Activated CD4-positive, alpha-beta T cell treated with anti-CD3 and anti-CD28 coated beads for 36 hours (primary cell): ENCODE measurements at regions of chr19 and their contacts with region 1.

Region 1: DNA sequence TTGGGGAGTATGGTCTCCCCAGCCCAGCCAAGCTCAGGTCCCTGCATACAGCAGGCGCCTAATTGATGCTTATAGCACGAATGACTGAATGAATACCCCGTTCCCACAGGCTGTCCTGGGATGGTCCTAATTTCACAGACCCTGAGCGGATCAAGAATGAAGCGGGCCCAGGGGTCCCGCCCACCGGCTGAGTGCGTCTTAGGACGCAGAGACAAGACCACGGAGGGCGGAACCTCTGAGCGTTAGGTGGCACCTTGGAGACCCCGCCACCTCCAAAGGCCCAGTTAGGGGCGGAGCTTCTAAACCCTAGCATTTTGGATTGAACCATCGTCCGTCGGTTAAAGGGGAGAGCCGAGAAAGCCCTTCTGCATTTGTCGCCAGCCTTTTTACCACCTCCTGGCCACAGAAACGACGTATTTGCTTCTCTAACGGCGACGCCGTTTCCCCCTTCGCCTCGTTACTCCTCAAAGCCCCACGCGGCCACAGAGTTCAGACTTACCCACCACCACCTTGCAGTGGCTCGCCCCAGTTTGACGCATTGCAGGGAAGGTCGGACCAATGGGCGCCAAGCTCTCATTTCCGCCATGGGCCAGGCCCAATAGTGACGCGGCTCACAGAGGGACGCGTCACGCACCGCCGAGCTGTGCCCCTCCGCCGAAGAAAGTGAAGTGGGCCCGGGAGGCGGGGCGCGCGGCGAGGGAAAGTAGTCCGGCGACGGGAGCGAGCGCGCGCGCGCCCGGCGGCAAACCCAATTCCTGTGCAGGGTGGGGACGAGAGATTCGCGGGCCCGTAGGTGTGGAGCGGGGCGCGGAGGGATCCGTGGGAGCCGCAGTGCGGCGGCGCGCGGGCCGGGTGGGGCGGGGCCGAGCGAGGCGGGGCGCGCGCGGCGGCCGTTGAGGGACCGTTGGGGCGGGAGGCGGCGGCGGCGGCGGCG is 479 bp upstream of the CALM3 start:
- DNase-seq: peak; percentile 99
- ATAC-seq: peak; percentile 86
- H3K4me3 Mint-ChIP-seq: peak overlapping the region; percentile 84
- H3K27ac Mint-ChIP-seq: peak overlapping the region; percentile 100
- H3K4me1 Mint-ChIP-seq: peaks cover 33% of the 10 kb centered on the region
- H3K27me3 Mint-ChIP-seq: no peaks in the 10 kb centered on the region

Region 2: GRCh38 chr19:44752816-44753618 is 1847.6 kb before region 1 on chr19:
- CTCF ChIA-PET with region 1: no interaction called
- POLR2A ChIA-PET with region 1: no interaction called
- intact Hi-C with region 1: loop called in 1 of 2 experiments (anchors 10 kb)
- DNase-seq: peak; percentile 98
- ATAC-seq: peak; percentile 79
- H3K4me3 Mint-ChIP-seq: peak overlapping the region; percentile 94
- H3K27ac Mint-ChIP-seq: peak overlapping the region; percentile 97
- H3K4me1 Mint-ChIP-seq: peaks cover 54% of the 10 kb centered on the region
- H3K27me3 Mint-ChIP-seq: no peaks in the 10 kb centered on the region

Region 3: DNA sequence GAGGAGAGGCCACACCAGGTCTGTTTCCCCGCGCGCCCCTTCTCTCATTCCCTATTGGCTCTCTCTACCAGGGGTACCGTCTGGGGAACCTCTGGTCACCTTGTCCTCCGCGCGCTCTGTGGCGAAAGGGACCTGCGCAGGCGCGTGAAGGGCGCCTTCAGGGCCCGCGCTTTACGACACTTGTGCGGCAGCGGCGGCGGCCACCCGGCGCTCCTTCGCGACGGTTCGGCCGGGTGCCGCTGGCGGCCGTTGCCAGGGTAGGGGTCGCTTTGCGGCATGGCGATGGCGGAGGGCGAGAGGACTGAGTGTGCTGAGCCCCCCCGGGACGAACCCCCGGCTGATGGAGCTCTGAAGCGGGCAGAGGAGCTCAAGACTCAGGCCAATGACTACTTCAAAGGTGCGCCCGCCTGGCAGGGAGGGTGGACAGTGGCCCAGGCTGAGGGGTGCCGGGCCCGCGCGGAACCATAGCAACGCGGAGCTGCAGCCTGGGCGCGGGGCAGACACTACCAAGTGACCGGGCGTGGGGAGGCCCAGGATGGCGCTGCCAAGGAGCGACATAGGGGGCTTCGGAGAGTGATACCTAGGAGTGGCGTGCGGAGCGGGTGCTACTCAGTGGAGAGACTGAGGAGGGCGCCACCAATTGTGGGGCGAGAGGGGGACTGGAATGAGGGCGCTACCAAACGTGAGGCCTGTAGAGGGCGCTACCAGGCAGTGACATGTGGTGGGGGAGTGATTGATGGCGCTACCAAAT is 253.7 kb before region 1 on chr19 and contains the start of gene PPP5C:
- CTCF ChIA-PET with region 1: no interaction called
- POLR2A ChIA-PET with region 1: interaction called, 4 read pairs
- intact Hi-C with region 1: loop called in 1 of 2 experiments (anchors 1 kb)
- DNase-seq: peak; percentile 94
- ATAC-seq: peak; percentile 74
- H3K4me3 Mint-ChIP-seq: peak within 1 kb of the TSS; percentile 90
- H3K27ac Mint-ChIP-seq: peak within 1 kb of the TSS; percentile 91
- H3K4me1 Mint-ChIP-seq: peaks cover 41% of the 10 kb centered on the region
- H3K27me3 Mint-ChIP-seq: no peaks in the 10 kb centered on the region
- total RNA-seq, gene PPP5C: 100.0 to 129 TPM

Region 4: GRCh38 chr19:46614114-46614722 is 13.6 kb after region 1 on chr19:
- CTCF ChIA-PET with region 1: interaction called, 65 read pairs
- POLR2A ChIA-PET with region 1: interaction called, 24 read pairs
- intact Hi-C with region 1: loop called (anchors 1 to 2 kb)
- DNase-seq: peak; percentile 92
- ATAC-seq: peak; percentile 49
- H3K4me3 Mint-ChIP-seq: no peak overlapping the region
- H3K27ac Mint-ChIP-seq: peak overlapping the region; percentile 62
- H3K4me1 Mint-ChIP-seq: peaks cover 82% of the 10 kb centered on the region
- H3K27me3 Mint-ChIP-seq: no peaks in the 10 kb centered on the region

Region 5: DNA sequence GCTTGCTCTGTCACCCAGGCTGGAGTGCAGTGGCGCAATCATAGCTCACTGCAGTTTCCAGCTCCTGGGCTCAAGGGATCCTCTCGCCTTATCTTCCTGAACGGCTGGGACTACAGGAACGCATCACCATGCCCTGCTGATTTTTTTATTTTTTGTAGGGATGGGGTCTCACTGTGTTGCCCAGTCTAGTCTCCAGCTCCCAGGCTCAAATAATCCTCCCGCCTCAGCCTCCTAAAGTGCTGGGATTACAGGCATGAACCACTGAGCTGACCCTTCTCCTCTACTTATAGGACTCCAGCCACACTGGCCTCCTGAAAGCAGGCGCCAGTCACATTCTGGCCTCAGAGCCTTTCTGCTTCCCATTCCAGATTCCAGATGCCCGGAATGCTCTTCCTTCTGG is 49.8 kb after region 1 on chr19:
- CTCF ChIA-PET with region 1: no interaction called
- POLR2A ChIA-PET with region 1: no interaction called
- intact Hi-C with region 1: no loop called
- DNase-seq: no peak
- ATAC-seq: no peak
- H3K4me3 Mint-ChIP-seq: no peak overlapping the region
- H3K27ac Mint-ChIP-seq: no peak overlapping the region
- H3K4me1 Mint-ChIP-seq: peaks cover 12% of the 10 kb centered on the region
- H3K27me3 Mint-ChIP-seq: peaks cover 38% of the 10 kb centered on the region

Region 6: GRCh38 chr19:46717034-46717723 is 116.5 kb after region 1 on chr19 and contains the start of gene PRKD2:
- CTCF ChIA-PET with region 1: interaction called, 3 read pairs
- POLR2A ChIA-PET with region 1: interaction called, 3 read pairs
- intact Hi-C with region 1: loop called in 1 of 2 experiments (anchors 1 kb)
- DNase-seq: peak; percentile 95
- ATAC-seq: peak; percentile 66
- H3K4me3 Mint-ChIP-seq: peak within 1 kb of the TSS; percentile 94
- H3K27ac Mint-ChIP-seq: peak within 1 kb of the TSS; percentile 95
- H3K4me1 Mint-ChIP-seq: peaks cover 40% of the 10 kb centered on the region
- H3K27me3 Mint-ChIP-seq: no peaks in the 10 kb centered on the region
- total RNA-seq, gene PRKD2: 76.0 to 78.3 TPM

Region 7: DNA sequence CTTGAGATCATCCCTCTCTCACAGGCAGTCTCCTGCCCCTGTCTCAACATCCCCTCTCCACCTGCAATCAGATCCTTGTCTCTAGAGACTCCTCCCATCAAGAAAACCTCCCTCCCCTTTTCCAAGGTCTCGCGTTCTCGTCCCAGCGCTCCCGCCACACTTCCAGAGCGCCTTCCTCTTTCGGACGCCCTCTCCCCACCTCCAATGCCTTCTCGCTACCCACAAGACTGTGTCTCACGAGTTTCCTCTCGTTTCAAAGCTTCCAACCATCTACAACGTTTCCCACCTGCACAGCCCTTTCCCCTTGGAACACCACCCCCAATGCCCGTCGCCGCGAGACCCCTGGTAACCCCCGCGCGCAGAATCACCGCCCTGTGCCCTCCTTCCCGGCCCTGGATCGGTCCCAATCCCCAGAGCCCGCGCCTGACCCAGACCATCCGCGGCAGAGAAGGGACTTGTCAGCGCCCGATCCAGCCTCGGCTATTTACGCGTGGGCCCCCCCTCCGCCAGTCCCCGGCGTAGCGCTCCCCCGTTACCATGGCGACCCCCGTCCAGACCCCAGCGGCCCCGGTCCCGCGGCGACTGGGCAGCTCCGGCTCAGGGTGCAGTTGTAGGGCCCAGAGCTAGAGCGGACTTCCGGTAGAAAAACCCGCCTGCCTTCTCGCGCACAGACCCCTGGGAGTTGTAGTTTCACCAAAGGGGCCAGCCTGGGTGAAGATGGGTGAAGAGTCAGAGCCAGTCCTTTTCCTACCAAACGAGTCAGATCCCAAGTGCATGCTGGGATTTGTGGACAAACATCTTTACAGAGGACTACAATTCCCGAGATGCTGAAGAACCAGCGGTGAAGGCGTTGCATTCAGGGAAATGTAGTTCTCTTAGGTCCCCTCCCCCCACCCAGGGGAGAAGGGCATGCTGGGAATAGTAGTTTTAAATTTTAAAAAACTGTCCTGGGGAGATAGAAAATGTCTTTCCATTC is 249.9 kb after region 1 on chr19 and contains the start of gene AP2S1:
- CTCF ChIA-PET with region 1: no interaction called
- POLR2A ChIA-PET with region 1: interaction called, 7 read pairs
- intact Hi-C with region 1: loop called in 1 of 2 experiments (anchors 2 kb)
- DNase-seq: peak; percentile 95
- ATAC-seq: peak; percentile 97
- H3K4me3 Mint-ChIP-seq: peak within 1 kb of the TSS; percentile 92
- H3K27ac Mint-ChIP-seq: peak within 1 kb of the TSS; percentile 64
- H3K4me1 Mint-ChIP-seq: peaks cover 21% of the 10 kb centered on the region
- H3K27me3 Mint-ChIP-seq: no peaks in the 10 kb centered on the region
- total RNA-seq, gene AP2S1: 102 to 104 TPM

Region 8: GRCh38 chr19:47225746-47226425 is 625.2 kb after region 1 on chr19:
- CTCF ChIA-PET with region 1: no interaction called
- POLR2A ChIA-PET with region 1: no interaction called
- intact Hi-C with region 1: loop called in 1 of 2 experiments (anchors 5 kb)
- DNase-seq: peak; percentile 93
- ATAC-seq: peak; percentile 70
- H3K4me3 Mint-ChIP-seq: peak overlapping the region; percentile 77
- H3K27ac Mint-ChIP-seq: no peak overlapping the region
- H3K4me1 Mint-ChIP-seq: peaks cover 16% of the 10 kb centered on the region
- H3K27me3 Mint-ChIP-seq: no peaks in the 10 kb centered on the region